Mammary epithelial cell (primary cell): ENCODE measurements at regions of chr2 and their contacts with region 1.

Region 1: GRCh38 chr2:26251893-26252292 is 7.2 kb downstream of the HADHB start:
- DNase-seq: no peak
- H3K4me3 ChIP-seq: no peak overlapping the region
- H3K27ac ChIP-seq: no peak overlapping the region
- H3K4me1 ChIP-seq: peaks cover 8% of the 10 kb centered on the region
- H3K27me3 ChIP-seq: no peaks in the 10 kb centered on the region
- CTCF ChIP-seq: no peak

Region 2: GRCh38 chr2:26335231-26335630 is 83.3 kb after region 1 on chr2:
- CTCF ChIA-PET with region 1: no interaction called
- dilution Hi-C with region 1: loop called (anchors 5 kb)
- in situ Hi-C with region 1: loop called in 1 of 2 experiments (anchors 10 kb)
- intact Hi-C with region 1: no loop called
- DNase-seq: no peak
- H3K4me3 ChIP-seq: no peak overlapping the region
- H3K27ac ChIP-seq: no peak overlapping the region
- H3K4me1 ChIP-seq: peaks cover 7% of the 10 kb centered on the region
- H3K27me3 ChIP-seq: no peaks in the 10 kb centered on the region
- CTCF ChIP-seq: no peak